IMR-90 (cell line): ENCODE measurements at regions of chr10 and their contacts with region 1.

Region 1: DNA sequence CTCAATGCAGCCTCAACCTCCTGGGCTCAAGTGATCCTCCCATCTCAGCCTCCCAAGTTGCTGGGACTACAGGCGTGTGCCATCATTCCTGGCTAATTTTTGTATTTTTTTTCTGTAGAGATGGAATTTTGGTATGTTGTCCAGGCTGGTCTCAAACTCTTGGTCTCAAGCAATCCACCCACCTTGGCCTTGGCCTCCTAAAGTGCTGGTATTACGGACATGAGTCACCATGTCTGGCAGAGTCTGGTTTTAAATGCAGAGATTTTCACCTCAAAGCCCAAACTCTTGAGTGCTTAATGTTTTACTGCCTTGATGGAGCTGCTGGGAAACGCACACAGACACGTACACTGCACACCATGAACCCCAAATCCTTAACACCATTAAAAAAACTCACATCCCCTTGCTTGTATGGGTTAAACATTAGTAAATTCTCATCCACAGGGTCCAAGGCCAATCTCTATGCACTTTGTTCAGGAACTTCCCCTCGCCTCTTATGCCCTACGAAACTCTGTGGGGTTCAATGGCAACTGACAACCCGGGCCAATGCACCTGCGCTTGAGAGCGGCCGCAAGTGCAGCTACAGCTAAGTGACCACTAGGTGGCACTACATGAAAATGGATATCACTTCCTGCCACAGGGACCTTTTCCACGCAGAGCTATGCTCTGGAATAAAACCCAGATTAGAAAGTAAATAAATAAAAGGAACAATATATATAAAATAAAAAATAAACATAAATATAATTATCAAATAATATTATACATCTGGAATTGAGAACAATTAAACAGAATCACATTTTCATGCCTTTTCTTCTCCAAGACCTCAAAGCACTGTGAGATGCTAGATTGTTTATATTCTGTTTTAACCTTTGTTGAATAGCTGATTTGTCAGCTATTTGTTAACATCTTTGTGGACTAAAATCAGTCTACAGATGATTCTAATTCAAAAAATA is 66.9 kb upstream of the AFAP1L2 start:
- DNase-seq: peak; percentile 77
- ATAC-seq: peak; percentile 98
- H3K4me3 ChIP-seq: no peak overlapping the region
- H3K27ac ChIP-seq: no peak overlapping the region
- H3K4me1 ChIP-seq: no peaks in the 10 kb centered on the region
- H3K27me3 ChIP-seq: peaks cover 2% of the 10 kb centered on the region; the same call in 1 of the 2 replicates
- CTCF ChIP-seq: peak; percentile 86
- POLR2A ChIP-seq: no peak
- RAD21 ChIP-seq: peak; percentile 83

Region 2: DNA sequence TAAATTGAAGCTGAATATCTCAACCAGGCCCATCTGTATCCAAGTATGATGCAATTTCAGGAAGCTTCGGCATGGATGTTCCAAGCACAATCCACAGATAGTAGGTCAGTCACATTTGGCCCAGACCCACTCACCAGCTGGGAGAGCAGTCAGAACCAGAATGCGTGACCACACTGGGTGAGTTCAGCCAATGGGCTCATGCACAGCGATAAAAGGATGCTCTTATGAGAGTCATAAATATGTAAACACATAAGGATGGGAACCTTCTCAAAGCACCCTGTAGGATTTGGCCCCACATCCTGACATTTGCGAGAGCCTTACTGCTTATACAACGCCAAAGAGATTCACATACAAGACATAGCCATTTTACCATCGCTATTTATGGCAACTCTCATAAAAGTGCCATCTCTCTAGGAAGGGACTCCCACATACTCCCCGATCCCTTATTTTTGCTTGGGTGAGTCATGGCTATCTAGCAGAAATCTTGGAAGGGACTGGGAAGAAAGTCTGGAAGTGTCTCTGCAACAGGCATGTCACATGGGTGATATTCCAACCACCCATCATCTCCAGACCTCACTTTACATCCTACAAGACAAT is 69.9 kb before region 1 on chr10:
- CTCF ChIA-PET with region 1: no interaction called
- POLR2A ChIA-PET with region 1: no interaction called
- dilution Hi-C with region 1: no loop called
- in situ Hi-C with region 1: no loop called
- intact Hi-C with region 1: no loop called
- DNase-seq: peak; percentile 49
- ATAC-seq: no peak
- H3K4me3 ChIP-seq: no peak overlapping the region
- H3K27ac ChIP-seq: no peak overlapping the region
- H3K4me1 ChIP-seq: no peaks in the 10 kb centered on the region
- H3K27me3 ChIP-seq: peaks cover 58% of the 10 kb centered on the region
- CTCF ChIP-seq: no peak
- POLR2A ChIP-seq: no peak
- RAD21 ChIP-seq: no peak

Region 3: DNA sequence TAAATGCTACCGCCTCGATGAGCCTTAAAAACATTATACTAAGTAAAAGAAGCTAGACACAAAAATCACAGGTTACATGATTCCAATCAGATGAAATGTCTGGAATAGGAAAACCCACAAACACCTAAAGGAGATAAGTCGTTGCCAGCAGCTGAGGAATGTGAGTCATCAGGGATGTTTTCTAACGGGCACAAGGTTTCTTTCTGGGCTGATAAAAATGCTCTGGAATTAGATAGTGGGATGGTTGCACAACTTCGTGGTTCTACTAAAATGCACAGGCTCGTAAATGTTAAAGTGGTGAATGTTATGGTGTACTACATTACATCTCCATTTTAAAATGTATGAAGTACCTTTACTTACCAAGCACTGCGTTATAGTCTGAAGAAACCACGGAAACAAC is 177.1 kb after region 1 on chr10:
- CTCF ChIA-PET with region 1: no interaction called
- POLR2A ChIA-PET with region 1: no interaction called
- dilution Hi-C with region 1: no loop called
- in situ Hi-C with region 1: no loop called
- intact Hi-C with region 1: no loop called
- DNase-seq: peak; percentile 94
- ATAC-seq: peak; percentile 84
- H3K4me3 ChIP-seq: no peak overlapping the region
- H3K27ac ChIP-seq: no peak overlapping the region
- H3K4me1 ChIP-seq: peaks cover 5% of the 10 kb centered on the region
- H3K27me3 ChIP-seq: no peaks in the 10 kb centered on the region
- CTCF ChIP-seq: no peak
- POLR2A ChIP-seq: no peak
- RAD21 ChIP-seq: no peak

Region 4: DNA sequence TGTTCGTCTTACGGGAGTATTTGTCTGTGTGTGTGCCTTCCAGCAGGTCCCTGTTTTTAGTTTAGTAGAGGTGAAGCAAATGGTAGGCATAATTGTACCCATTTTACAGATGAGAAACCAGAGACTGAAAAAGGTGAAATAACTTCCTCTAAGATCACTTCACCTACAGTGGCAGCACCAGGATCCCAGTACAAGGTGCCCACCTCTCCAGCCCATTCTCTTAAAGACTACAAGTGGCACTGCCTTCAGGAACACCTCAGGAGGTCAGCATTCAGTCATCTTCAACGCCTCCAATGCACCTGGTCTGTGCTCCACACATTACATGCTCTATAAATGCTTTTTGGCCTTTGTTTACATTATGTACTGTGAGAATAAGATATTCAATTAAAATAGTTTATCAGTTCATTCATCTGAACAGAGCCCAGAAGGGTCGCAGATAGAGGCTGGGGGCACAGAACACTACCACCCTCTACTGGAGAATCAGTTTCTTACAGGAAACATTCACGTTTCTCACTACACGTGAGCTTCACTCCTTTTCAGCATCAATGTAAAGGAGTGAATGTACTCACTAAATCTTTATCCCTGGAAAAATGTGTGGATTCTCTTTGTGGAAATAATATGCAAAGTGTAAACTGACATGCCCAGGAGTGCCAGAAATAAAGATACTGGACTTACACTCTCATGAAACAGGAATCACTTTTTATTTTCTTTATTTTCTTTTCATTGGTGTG is 232.3 kb after region 1 on chr10:
- CTCF ChIA-PET with region 1: no interaction called
- POLR2A ChIA-PET with region 1: no interaction called
- dilution Hi-C with region 1: no loop called
- in situ Hi-C with region 1: loop called (anchors 10 kb)
- intact Hi-C with region 1: loop called (anchors 1 kb)
- DNase-seq: peak; percentile 43
- ATAC-seq: peak; percentile 70
- H3K4me3 ChIP-seq: no peak overlapping the region
- H3K27ac ChIP-seq: no peak overlapping the region
- H3K4me1 ChIP-seq: 0 out of 2 replicates have a peak, but pooled peaks cover 2% of the 10 kb centered on the region
- H3K27me3 ChIP-seq: no peaks in the 10 kb centered on the region; the same call in 1 of the 2 replicates
- CTCF ChIP-seq: peak; percentile 80
- POLR2A ChIP-seq: no peak
- RAD21 ChIP-seq: peak; percentile 91

Region 5: GRCh38 chr10:115129752-115130151 is 658.5 kb after region 1 on chr10:
- CTCF ChIA-PET with region 1: no interaction called
- POLR2A ChIA-PET with region 1: no interaction called
- dilution Hi-C with region 1: no loop called
- in situ Hi-C with region 1: loop called (anchors 25 kb)
- intact Hi-C with region 1: loop called (anchors 2 kb)
- DNase-seq: peak; percentile 37
- ATAC-seq: peak; percentile 46
- H3K4me3 ChIP-seq: no peak overlapping the region
- H3K27ac ChIP-seq: no peak overlapping the region
- H3K4me1 ChIP-seq: no peaks in the 10 kb centered on the region
- H3K27me3 ChIP-seq: no peaks in the 10 kb centered on the region
- CTCF ChIP-seq: peak; percentile 56
- POLR2A ChIP-seq: no peak
- RAD21 ChIP-seq: peak; percentile 67